ENCODE measurements at regions of chr4 and their contacts with region 1.

Region 1: DNA sequence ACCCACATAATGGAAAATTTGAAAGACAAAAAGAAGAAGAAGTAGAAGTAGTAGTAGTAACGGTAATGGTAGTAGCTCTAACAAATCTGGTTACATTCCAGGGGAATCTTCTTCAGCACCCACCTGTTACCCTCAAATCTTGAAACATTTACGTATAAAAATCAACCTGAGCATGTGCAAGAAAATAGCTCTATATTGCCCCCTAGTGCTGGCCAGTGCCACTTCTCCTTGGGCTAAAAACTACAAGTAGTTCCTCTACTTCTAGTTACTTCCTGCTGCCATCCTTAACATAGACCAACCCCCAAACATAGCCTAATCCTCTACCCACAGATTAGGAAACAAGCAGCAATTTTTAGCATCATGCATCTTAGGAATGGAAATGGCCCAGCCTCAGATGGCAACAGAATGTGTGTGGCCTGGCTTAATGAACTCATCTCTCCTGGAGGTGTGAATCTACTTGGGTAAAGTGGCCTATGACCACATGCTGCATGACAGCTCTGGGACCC is 3.1 kb downstream of the PDGFC start:
- DNase-seq: peak; percentile 38 to 61 (median 55)
- ATAC-seq: peak; percentile 68 to 70
- H3K4me3 ChIP-seq: no peak overlapping the region
- H3K27ac ChIP-seq: no peak overlapping the region
- H3K4me1 ChIP-seq: no peaks in the 10 kb centered on the region
- H3K27me3 ChIP-seq: no peaks in the 10 kb centered on the region

Region 2: DNA sequence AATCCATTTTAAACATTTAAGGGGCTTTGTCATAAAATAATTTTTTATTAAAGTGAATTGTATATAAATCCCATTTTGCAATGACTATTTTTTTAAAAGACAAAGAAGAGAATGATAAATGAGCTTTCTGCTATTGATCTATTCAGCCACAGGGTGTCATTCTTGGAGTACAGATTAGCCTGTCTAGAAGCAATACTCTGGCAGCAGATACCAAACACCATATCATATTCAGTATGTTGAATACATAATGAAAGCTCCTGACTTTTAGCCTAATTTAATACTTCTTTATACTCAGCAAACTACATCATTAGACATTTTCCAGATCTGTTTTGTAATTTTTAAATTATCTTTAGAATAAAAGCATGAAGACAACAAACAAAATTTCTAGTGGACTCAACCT is 493.2 kb before region 1 on chr4:
- intact Hi-C with region 1: loop called in 3 of 4 experiments (anchors 10 kb)
- DNase-seq: no peak
- ATAC-seq: peak in 1 of 2 donors; percentile 66
- H3K4me3 ChIP-seq: no peak overlapping the region
- H3K27ac ChIP-seq: no peak overlapping the region
- H3K4me1 ChIP-seq: no peaks in the 10 kb centered on the region
- H3K27me3 ChIP-seq: no peaks in the 10 kb centered on the region

Region 3: GRCh38 chr4:156487107-156487506 is 481.4 kb before region 1 on chr4:
- intact Hi-C with region 1: loop called in 2 of 4 experiments (anchors 10 kb)
- DNase-seq: no peak
- ATAC-seq: no peak
- H3K4me3 ChIP-seq: no peak overlapping the region
- H3K27ac ChIP-seq: no peak overlapping the region
- H3K4me1 ChIP-seq: no peaks in the 10 kb centered on the region
- H3K27me3 ChIP-seq: no peaks in the 10 kb centered on the region

Region 4: DNA sequence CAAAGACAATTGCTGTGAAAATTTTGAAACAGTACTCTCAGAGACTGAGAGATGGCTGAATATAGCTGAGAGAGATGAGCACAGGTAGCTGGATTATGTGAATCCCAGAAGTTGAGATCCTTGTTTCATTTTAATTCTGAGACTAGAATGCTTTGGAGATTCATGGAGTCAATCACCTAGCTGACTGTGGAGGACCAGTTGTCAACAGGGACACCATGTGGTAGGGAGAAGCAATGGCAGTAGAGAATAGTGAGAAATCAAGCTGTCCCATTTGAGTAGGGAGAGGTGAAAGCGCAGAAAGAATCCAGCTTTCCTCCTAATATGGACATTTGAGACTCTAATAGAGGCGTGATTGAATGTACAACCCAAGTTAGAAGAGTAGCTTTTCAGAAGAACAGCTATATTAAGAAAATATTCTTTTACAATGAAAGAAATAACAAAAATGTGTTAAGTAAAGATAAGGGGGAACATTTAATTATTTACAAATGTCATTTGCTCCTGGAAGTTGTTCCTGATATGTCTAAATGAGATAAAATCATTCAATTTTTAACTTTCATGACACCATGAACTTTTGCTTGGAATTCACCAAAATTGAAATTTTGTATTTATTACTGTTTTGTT is 77.1 kb after region 1 on chr4:
- intact Hi-C with region 1: loop called in 2 of 4 experiments (anchors 10 kb)
- DNase-seq: no peak
- ATAC-seq: peak; percentile 83
- H3K4me3 ChIP-seq: no peak overlapping the region
- H3K27ac ChIP-seq: no peak overlapping the region
- H3K4me1 ChIP-seq: no peaks in the 10 kb centered on the region
- H3K27me3 ChIP-seq: no peaks in the 10 kb centered on the region

Measured in right cardiac atrium (tissue), 5 donors.